CD14-positive monocyte (primary cell): ENCODE measurements at regions of chr12 and their contacts with region 1.

Region 1: DNA sequence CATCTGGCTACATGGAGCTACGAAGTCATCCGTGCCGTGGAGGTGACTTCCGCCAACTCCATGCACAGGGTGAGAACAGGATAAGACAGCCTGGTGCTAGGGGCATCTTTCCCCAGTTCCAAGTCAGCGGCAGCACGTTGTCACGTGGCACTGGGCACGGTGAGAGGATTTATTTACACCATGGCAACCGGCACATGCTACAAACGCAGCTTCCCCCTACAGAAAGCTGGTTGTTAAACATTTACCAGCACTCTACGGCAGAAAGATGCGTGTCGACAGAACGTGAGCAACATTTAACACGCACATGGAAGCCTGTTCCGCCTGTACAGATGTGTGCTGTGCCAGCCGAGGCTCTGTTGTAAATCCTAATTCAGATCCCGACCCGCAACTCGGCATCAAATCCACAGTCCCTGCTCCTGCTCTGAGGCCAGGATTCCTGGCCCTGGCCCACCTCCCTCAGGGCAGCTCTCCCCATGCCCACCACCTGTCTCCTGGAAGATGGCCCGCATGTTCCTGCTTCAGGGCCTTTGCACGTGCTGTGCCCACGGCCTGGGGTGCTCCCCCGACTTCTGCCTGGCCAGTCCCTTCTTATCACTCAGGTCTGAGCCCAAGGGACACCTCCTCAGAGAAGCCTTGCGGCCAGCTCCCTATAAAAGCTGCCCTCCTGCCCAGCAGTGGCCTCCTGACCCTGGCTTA is 114.1 kb downstream of the RFLNA start:
- DNase-seq: no peak
- H3K4me3 ChIP-seq: no peak overlapping the region
- H3K4me3 Mint-ChIP-seq: no peak overlapping the region
- H3K27ac ChIP-seq: no peak overlapping the region
- H3K27ac Mint-ChIP-seq: peak overlapping the region in 2 of 7 donors; percentile 50 to 73
- H3K4me1 ChIP-seq: no peaks in the 10 kb centered on the region
- H3K4me1 Mint-ChIP-seq: no peaks in the 10 kb centered on the region
- H3K27me3 ChIP-seq: no peaks in the 10 kb centered on the region
- H3K27me3 Mint-ChIP-seq: peaks cover 0 to 2% (median 0%) of the 10 kb centered on the region in 3 donors
- CTCF ChIP-seq: no peak

Region 2: DNA sequence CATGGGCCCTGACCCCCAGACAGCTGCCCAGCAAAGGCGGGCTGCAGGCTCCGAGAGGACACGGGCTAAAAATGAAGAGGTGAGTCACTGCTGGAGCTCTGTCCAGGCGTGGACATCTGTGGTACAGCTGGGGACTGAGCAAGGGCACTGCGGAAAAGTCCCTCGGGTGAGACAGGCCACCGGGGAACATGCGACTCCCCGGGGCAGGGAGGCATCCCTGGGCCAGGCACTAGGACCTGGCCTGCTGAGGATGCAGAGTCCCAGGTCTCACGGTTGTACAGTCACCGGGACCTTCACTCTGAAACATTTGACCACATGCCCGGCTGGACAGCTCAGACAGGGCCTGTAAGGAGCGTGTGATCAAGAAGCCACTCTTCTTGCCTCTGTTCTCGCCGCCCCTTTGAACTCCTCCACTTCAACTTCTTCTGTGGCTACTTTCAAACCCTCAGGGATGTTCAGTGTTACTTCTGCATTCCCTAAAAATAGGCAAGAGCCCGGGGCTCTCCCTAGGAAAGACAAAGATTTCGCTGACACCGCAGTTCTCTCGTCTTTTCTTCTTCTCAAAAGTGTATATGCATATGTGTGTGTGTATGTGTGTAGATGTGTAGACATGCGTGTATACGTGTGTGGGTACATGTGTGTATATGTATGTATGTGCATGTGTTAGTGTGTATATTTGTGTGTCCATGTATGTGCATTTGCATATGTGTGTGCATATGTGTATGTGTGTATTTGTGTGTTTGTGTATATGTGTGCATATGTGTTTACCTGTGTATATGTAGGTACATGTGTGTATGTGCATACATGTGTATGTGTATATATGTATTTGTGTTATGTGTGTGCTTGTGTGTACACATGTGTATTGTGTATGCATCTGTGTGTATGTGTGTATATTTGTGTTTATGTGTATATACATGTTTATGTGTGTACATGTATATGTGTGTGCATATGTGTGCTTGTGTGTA is 119.1 kb before region 1 on chr12:
- intact Hi-C with region 1: no loop called
- DNase-seq: no peak
- H3K4me3 ChIP-seq: no peak overlapping the region
- H3K4me3 Mint-ChIP-seq: no peak overlapping the region
- H3K27ac ChIP-seq: no peak overlapping the region
- H3K27ac Mint-ChIP-seq: peak overlapping the region in 2 of 7 donors; percentile 35 to 43
- H3K4me1 ChIP-seq: peaks cover 0 to 8% of the 10 kb centered on the region in 2 donors
- H3K4me1 Mint-ChIP-seq: peaks cover 6% of the 10 kb centered on the region
- H3K27me3 ChIP-seq: peaks cover 2 to 16% of the 10 kb centered on the region in 2 donors
- H3K27me3 Mint-ChIP-seq: peaks cover 14 to 28% (median 15%) of the 10 kb centered on the region in 3 donors
- CTCF ChIP-seq: no peak

Region 3: DNA sequence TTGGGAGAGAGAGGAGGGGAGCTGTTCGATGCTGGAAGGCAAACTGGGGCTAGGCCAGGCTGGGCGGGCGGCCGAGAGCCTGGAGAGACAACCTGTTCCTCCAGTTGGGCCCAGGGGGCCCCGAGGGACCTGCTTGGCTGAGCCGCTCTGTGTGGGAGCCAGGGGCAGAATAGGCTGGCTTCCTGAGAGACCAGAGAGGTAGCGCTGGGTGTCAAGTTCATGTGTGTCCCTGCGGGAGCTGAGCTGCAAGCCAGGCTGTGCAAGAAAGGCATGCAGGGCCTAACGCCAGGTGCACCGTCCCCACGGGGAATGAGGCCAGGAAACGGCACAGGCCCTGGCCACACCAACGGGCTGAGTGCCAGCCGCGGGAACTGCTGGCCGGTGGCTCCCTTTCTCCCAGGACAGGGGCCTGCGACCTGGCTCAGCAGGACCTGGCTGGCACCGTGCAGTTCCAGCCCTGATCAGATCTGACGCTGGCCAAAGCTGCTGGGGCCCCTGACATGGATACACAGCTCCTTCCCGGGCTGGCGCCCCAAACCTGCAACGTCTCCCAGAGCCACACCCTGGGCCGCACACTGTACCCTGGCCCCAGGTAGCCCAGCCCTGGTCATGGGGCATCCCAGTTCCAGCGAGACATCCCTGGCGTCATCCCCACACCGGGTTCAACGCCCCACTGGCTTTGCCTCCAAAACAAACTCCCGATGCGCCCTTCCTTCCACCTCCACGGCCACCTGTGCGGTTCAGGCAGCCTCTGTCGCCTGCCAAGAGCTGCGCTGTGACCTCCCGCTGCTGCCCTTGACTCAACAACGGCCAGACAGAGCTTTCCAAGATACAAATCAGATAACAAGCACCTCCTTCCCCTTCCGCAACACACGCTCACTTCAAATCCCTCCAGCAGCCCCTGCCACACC is 49.0 kb before region 1 on chr12:
- intact Hi-C with region 1: loop called in 1 of 2 experiments (anchors 5 kb)
- DNase-seq: no peak
- H3K4me3 ChIP-seq: no peak overlapping the region
- H3K4me3 Mint-ChIP-seq: no peak overlapping the region
- H3K27ac ChIP-seq: no peak overlapping the region
- H3K27ac Mint-ChIP-seq: peak overlapping the region in 5 of 7 donors; percentile 1 to 60 (median 35)
- H3K4me1 ChIP-seq: no peaks in the 10 kb centered on the region
- H3K4me1 Mint-ChIP-seq: no peaks in the 10 kb centered on the region
- H3K27me3 ChIP-seq: no peaks in the 10 kb centered on the region
- H3K27me3 Mint-ChIP-seq: peaks cover 0 to 1% (median 0%) of the 10 kb centered on the region in 3 donors
- CTCF ChIP-seq: no peak

Region 4: GRCh38 chr12:124466216-124467128 is 57.5 kb after region 1 on chr12:
- intact Hi-C with region 1: no loop called
- DNase-seq: peak; percentile 95 to 98 (median 96)
- H3K4me3 ChIP-seq: peak overlapping the region in 1 of 3 experiments; percentile 52
- H3K4me3 Mint-ChIP-seq: peak overlapping the region; percentile 60 to 68
- H3K27ac ChIP-seq: peak overlapping the region; percentile 37 to 70
- H3K27ac Mint-ChIP-seq: peak overlapping the region; percentile 62 to 93 (median 87)
- H3K4me1 ChIP-seq: peaks cover 33 to 37% of the 10 kb centered on the region in 2 donors
- H3K4me1 Mint-ChIP-seq: peaks cover 37% of the 10 kb centered on the region
- H3K27me3 ChIP-seq: no peaks in the 10 kb centered on the region
- H3K27me3 Mint-ChIP-seq: peaks cover 0 to 3% (median 0%) of the 10 kb centered on the region in 3 donors
- CTCF ChIP-seq: peak; percentile 61